Upper lobe of right lung (tissue), 1 donor: ENCODE measurements at regions of chrX and their contacts with region 1.

Region 1: DNA sequence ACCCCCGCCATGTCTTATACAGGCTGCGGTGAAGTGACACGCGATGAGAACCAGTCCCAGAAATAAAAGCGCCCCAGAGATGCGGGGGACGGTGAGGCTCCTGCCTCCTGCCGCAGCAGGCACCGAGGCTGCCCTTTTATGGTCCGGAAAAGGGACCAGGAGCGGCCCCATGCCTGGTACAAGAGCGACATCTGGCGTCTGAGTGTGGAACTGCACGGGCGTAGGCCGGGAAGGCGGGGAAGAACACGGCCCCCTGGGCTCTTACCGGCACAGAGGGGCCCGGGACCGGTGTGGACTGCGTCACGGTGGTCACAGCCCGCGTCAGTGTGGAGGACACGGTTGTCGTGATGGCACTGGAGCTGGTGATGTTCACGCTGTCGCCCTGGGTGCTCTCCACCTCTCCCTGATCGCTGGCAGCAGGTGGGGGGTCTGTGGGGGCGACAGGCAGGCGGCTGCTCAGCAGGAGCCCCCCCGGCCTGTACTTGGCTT is 8.9 kb upstream of the RENBP start:
- DNase-seq: peak; percentile 76
- ATAC-seq: peak; percentile 87
- H3K4me3 ChIP-seq: no peak overlapping the region
- H3K27ac ChIP-seq: no peak overlapping the region
- H3K4me1 ChIP-seq: peaks cover 3% of the 10 kb centered on the region
- H3K27me3 ChIP-seq: no peaks in the 10 kb centered on the region
- CTCF ChIP-seq: peak; percentile 93

Region 2: DNA sequence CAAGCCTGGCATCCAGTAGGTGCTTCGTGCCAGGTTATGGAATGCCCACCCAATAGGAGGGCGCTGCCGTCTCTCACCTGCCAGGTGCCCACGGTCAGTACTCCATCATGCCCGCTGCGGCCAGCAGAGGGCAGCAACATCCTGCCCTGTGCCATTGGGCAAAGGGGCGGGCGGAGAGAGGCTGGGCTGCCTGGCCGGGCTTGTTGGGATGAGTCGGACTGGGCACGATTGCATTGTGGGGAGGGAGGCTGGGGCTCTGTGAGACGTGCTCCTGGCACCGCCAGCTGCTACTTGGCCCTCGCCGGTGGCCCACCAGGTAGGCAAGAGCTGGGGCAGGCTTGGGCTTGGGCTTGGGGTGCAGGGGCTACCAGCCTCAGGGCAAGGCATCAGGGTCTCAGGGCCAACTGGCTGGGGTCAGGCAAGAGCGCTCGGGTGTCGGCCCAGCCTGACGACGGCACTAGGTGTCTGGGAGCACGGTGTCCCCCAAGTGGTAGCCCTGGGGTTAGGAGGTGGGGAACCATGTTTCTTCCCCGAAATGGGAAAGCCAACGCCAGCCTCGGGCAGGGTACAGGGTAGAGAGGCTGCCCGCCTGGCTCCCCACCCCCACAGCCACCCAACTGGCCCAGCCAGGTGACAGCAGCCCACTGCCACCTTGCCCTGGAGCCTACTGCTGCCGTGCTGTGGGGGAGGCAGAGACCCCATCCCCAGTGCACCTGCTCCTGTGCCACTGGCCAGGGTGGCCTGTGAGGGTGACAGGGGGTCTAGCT is 189.2 kb before region 1 on chrX and contains the start of gene PLXNB3:
- intact Hi-C with region 1: loop called (anchors 10 kb)
- DNase-seq: peak; percentile 89
- ATAC-seq: peak; percentile 95
- H3K4me3 ChIP-seq: no peak within 1 kb of the TSS
- H3K27ac ChIP-seq: peak within 1 kb of the TSS; percentile 42
- H3K4me1 ChIP-seq: peaks cover 3% of the 10 kb centered on the region
- H3K27me3 ChIP-seq: no peaks in the 10 kb centered on the region
- CTCF ChIP-seq: peak; percentile 77
- total RNA-seq, gene PLXNB3: 3.3 TPM

Region 3: DNA sequence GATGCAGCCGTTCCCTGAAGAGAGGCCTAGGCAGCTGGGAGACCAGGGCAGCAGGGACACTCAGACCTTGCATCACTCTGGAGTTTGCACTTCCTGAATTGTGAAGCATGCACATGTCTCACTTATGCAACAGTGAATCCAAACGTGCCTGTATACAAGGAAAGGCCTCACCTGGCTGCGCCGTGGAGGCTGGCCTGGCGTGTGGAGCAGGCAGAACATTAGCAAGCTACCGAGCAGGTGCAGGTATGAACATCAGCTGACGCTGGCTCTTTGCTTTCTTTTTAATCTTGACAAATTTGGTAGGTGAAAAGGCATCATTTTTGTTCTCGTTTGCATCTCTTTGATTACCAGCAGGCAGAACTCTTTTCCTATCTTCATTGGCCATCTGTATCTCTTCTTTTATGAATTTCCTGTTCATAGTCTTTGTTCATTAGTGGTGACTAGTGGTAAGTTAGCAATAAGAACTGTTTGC is 103.4 kb after region 1 on chrX:
- intact Hi-C with region 1: no loop called
- DNase-seq: no peak
- ATAC-seq: peak; percentile 82
- H3K4me3 ChIP-seq: no peak overlapping the region
- H3K27ac ChIP-seq: no peak overlapping the region
- H3K4me1 ChIP-seq: peaks cover 10% of the 10 kb centered on the region
- H3K27me3 ChIP-seq: no peaks in the 10 kb centered on the region
- CTCF ChIP-seq: no peak